GM12878 (cell line): ENCODE measurements at regions of chr3 and their contacts with region 1.

Region 1: GRCh38 chr3:194592798-194593752 is 40.1 kb downstream of the TMEM44 start:
- DNase-seq: no peak
- ATAC-seq: peak; percentile 70
- H3K4me3 ChIP-seq: no peak overlapping the region
- H3K27ac ChIP-seq: no peak overlapping the region
- H3K4me1 ChIP-seq: peaks cover 3% of the 10 kb centered on the region
- H3K27me3 ChIP-seq: no peaks in the 10 kb centered on the region
- CTCF ChIP-seq: no peak
- EP300 ChIP-seq: no peak
- POLR2A ChIP-seq: no peak
- RAD21 ChIP-seq: no peak

Region 2: GRCh38 chr3:193554811-193555210 is 1038.3 kb before region 1 on chr3 and contains the start of gene ATP13A4:
- CTCF ChIA-PET with region 1: no interaction called
- POLR2A ChIA-PET with region 1: no interaction called
- RAD21 ChIA-PET with region 1: no interaction called
- SMC1A ChIA-PET with region 1: no interaction called
- in situ Hi-C with region 1: no loop called
- intact Hi-C with region 1: no loop called
- DNase-seq: no peak
- ATAC-seq: no peak
- H3K4me3 ChIP-seq: no peak within 1 kb of the TSS
- H3K27ac ChIP-seq: no peak within 1 kb of the TSS
- H3K4me1 ChIP-seq: no peaks in the 10 kb centered on the region
- H3K27me3 ChIP-seq: no peaks in the 10 kb centered on the region
- CTCF ChIP-seq: no peak
- EP300 ChIP-seq: no peak
- POLR2A ChIP-seq: no peak
- RAD21 ChIP-seq: no peak
- polyA plus RNA-seq, gene ATP13A4: 0.29 to 0.75 TPM

Region 3: GRCh38 chr3:194333212-194333980 is 259.7 kb before region 1 on chr3:
- CTCF ChIA-PET with region 1: interaction called, 5 read pairs
- POLR2A ChIA-PET with region 1: no interaction called
- RAD21 ChIA-PET with region 1: no interaction called
- SMC1A ChIA-PET with region 1: interaction called, 3 read pairs
- in situ Hi-C with region 1: loop called (anchors 5 kb)
- intact Hi-C with region 1: loop called (anchors 5 kb)
- DNase-seq: no peak
- ATAC-seq: peak; percentile 99
- H3K4me3 ChIP-seq: peak overlapping the region; percentile 49; the same call in 1 of the 2 replicates
- H3K27ac ChIP-seq: no peak overlapping the region
- H3K4me1 ChIP-seq: no peaks in the 10 kb centered on the region
- H3K27me3 ChIP-seq: peaks cover 0 to 7% of the 10 kb centered on the region in 2 experiments; a peak in 3 of 4 replicates
- CTCF ChIP-seq: peak; percentile 95 to 99 (median 97); a peak in 5 of 6 replicates
- EP300 ChIP-seq: no peak
- POLR2A ChIP-seq: no peak
- RAD21 ChIP-seq: peak; percentile 96

Region 4: DNA sequence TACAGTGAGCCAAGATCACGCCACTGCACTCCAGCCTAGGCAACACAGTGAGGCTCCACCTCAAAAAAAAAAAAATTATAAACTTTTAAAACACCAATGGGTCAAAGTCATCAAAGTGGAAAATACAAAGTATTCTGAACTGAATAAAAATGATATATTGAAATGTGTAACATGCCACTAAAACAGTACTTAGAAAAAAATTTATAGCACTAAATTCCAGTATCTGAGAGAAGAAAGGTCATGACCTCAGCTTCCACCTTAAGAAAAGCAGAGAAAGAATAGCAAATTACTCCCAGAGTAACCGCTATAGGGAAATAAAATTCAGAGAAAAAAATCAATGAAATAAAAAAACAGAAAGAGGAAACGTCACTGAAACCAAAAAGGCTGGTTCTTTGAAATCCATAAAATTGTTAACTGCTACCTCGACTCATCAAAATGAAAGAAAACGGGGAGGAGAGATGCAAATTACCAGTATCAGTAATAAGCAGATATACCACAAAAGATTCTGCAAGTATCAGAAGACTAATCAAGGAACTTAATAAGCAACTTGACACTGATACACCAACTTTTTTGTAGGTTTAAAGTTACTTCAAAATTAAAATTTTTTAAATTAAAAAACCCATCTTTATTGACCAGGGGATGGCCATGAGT is 127.0 kb before region 1 on chr3:
- CTCF ChIA-PET with region 1: interaction called, 131 read pairs
- POLR2A ChIA-PET with region 1: no interaction called
- RAD21 ChIA-PET with region 1: interaction called, 56 read pairs
- SMC1A ChIA-PET with region 1: interaction called, 8 read pairs
- in situ Hi-C with region 1: no loop called
- intact Hi-C with region 1: no loop called
- DNase-seq: no peak
- ATAC-seq: peak; percentile 74
- H3K4me3 ChIP-seq: no peak overlapping the region
- H3K27ac ChIP-seq: no peak overlapping the region; the same call in 1 of the 2 replicates
- H3K4me1 ChIP-seq: peaks cover 10% of the 10 kb centered on the region
- H3K27me3 ChIP-seq: no peaks in the 10 kb centered on the region
- CTCF ChIP-seq: no peak
- EP300 ChIP-seq: no peak
- POLR2A ChIP-seq: no peak
- RAD21 ChIP-seq: no peak

Region 5: GRCh38 chr3:194623449-194624290 is 30.6 kb after region 1 on chr3:
- CTCF ChIA-PET with region 1: no interaction called
- POLR2A ChIA-PET with region 1: no interaction called
- RAD21 ChIA-PET with region 1: no interaction called
- SMC1A ChIA-PET with region 1: no interaction called
- in situ Hi-C with region 1: no loop called
- intact Hi-C with region 1: no loop called
- DNase-seq: no peak
- ATAC-seq: no peak
- H3K4me3 ChIP-seq: no peak overlapping the region
- H3K27ac ChIP-seq: no peak overlapping the region
- H3K4me1 ChIP-seq: no peaks in the 10 kb centered on the region
- H3K27me3 ChIP-seq: no peaks in the 10 kb centered on the region
- CTCF ChIP-seq: 0 out of 6 replicates have a peak, but pooled peaks of 1 of the 3 experiments have one; percentile 4
- EP300 ChIP-seq: no peak
- POLR2A ChIP-seq: no peak
- RAD21 ChIP-seq: no peak